ENCODE measurements at regions of chrX and their contacts with region 1.

Region 1: GRCh38 chrX:15645258-15645657 is 19.3 kb downstream of the CLTRN start:
- DNase-seq: no peak
- ATAC-seq: no peak
- H3K4me3 Mint-ChIP-seq: no peak overlapping the region
- H3K27ac Mint-ChIP-seq: no peak overlapping the region
- H3K4me1 Mint-ChIP-seq: peaks cover 13% of the 10 kb centered on the region
- H3K27me3 Mint-ChIP-seq: no peaks in the 10 kb centered on the region

Region 2: GRCh38 chrX:15356444-15356843 is 288.8 kb before region 1 on chrX:
- CTCF ChIA-PET with region 1: no interaction called
- POLR2A ChIA-PET with region 1: no interaction called
- intact Hi-C with region 1: loop called in 1 of 2 experiments (anchors 10 kb)
- DNase-seq: no peak
- ATAC-seq: no peak
- H3K4me3 Mint-ChIP-seq: no peak overlapping the region
- H3K27ac Mint-ChIP-seq: no peak overlapping the region
- H3K4me1 Mint-ChIP-seq: no peaks in the 10 kb centered on the region
- H3K27me3 Mint-ChIP-seq: peaks cover 2% of the 10 kb centered on the region

Region 3: GRCh38 chrX:15493118-15493962 is 151.9 kb before region 1 on chrX and contains the start of gene PIR:
- CTCF ChIA-PET with region 1: interaction called, 4 read pairs
- POLR2A ChIA-PET with region 1: no interaction called
- intact Hi-C with region 1: loop called in 1 of 2 experiments (anchors 5 kb)
- DNase-seq: peak; percentile 77
- ATAC-seq: peak; percentile 95
- H3K4me3 Mint-ChIP-seq: peak within 1 kb of the TSS; percentile 75
- H3K27ac Mint-ChIP-seq: peak within 1 kb of the TSS; percentile 47
- H3K4me1 Mint-ChIP-seq: peaks cover 4% of the 10 kb centered on the region
- H3K27me3 Mint-ChIP-seq: peaks cover 2% of the 10 kb centered on the region
- total RNA-seq, gene PIR: 1.4 to 2.3 TPM

Region 4: DNA sequence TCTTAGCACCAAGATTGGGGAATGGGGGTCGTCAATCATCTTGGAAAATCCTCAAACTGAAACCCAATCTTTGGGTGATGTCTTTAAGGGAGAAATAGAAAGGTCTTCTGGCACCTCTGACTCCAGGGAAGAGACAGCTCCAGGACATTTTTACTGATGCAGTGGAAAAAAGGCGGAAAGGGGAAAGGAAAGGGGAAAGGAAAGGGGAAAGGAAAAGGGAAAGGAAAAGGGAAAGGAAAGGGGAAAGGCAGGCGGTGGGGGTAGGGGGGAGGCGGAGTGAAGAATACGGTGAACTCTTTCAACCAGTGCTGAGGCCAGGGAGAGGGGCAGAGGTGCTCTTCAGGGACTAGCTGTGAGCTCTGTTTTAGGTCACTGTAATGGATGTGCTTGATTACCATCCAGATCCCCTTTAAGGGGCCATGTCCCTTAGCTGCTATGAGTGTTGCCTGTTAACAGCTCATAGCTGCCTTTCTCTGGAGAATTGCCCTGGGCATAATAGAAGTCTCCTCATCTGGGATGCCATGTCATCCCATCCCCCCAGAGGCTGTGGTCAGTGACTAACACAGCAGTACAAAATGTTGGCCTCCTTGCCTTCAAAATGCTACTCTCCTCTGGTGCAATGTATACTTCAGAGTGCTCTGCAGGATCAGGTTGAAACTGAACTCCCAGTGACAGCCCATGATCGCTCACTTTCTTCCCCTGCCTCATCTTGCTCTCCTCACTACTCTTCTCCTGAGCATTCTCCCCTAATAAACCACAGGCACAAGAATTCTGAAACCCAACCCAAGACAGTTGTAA is 301.7 kb after region 1 on chrX:
- CTCF ChIA-PET with region 1: no interaction called
- POLR2A ChIA-PET with region 1: no interaction called
- intact Hi-C with region 1: no loop called
- DNase-seq: peak; percentile 35
- ATAC-seq: peak; percentile 55
- H3K4me3 Mint-ChIP-seq: no peak overlapping the region
- H3K27ac Mint-ChIP-seq: no peak overlapping the region
- H3K4me1 Mint-ChIP-seq: no peaks in the 10 kb centered on the region
- H3K27me3 Mint-ChIP-seq: peaks cover 5% of the 10 kb centered on the region

Measured in activated CD4-positive, alpha-beta T cell treated with anti-CD3 and anti-CD28 coated beads for 36 hours (primary cell).